ENCODE measurements at regions of chr11 and their contacts with region 1.

Region 1: DNA sequence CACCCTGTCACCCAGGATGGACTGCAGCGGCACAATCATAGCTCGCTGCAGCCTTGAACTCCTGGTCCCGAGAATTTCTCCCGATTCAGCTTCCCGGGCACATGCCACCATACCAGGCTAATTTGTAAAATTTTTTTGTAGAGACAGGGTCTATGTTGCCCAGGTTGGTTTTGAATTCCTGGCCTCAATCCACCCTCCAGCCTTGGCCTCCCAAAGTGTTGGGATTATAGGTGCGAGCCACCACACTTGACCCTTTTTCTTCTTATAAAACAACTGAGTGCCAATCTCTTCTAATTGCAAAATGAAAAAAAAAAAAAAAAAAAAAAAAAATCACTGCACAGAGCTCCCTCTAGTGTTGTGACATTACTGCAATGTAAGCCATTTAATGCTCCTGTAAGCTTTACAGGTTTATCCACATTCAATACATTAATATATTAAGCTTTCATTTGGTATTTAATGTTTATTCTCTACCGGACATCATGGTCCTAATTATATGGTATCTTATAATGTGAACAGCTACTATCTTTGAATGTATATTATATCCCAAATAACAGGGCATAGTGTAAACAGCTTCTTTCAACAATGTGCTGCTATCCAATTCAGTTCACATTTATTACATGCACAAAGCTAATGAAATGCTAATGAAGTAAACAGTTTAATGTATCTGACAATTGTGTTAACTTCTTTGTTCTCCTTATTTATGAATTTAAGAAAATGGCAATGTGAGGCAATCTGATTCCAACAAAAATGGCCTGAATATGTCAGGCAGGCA is 44.6 kb downstream of the COPB1 start:
- DNase-seq: no peak
- ATAC-seq: peak; percentile 47
- H3K4me3 Mint-ChIP-seq: no peak overlapping the region
- H3K27ac Mint-ChIP-seq: peak overlapping the region; percentile 20
- H3K4me1 Mint-ChIP-seq: peaks cover 7% of the 10 kb centered on the region
- H3K27me3 Mint-ChIP-seq: no peaks in the 10 kb centered on the region
- CTCF ChIP-seq: peak; percentile 83

Region 2: DNA sequence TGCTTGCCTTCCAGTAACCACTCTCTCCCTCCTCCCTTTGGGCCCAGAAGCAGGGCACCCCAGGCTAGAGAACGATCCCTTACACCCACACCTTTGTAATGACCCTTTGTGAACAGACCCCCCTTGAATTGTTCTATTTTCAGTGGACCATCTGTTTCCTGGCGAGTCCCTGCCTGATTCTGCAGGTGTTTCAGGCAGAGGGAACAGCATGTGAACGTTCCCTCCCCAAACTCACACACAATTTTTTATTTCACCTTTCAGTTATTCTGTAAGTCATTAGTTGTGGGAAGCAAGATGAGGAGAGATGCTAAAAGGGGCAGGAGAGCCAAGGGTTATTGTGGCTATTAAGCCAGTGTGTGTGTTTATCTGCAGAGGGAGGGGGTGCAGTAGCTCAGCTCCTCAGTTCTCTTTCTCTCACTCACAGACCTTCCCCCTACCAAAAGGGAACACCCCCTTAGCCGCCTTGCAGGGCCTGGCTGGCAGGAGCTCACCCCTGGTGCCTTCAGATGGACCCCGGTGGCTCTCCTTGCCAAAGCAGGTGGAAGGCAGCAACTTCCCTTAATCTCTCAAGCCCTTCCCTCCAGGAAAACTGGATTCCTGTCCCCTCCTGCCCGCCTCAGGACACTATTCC is 557.3 kb before region 1 on chr11:
- CTCF ChIA-PET with region 1: no interaction called
- POLR2A ChIA-PET with region 1: no interaction called
- intact Hi-C with region 1: no loop called
- DNase-seq: no peak
- ATAC-seq: no peak
- H3K4me3 Mint-ChIP-seq: no peak overlapping the region
- H3K27ac Mint-ChIP-seq: no peak overlapping the region
- H3K4me1 Mint-ChIP-seq: no peaks in the 10 kb centered on the region
- H3K27me3 Mint-ChIP-seq: peaks cover 1% of the 10 kb centered on the region
- CTCF ChIP-seq: no peak

Region 3: GRCh38 chr11:14015476-14016110 is 439.5 kb before region 1 on chr11:
- CTCF ChIA-PET with region 1: no interaction called
- POLR2A ChIA-PET with region 1: no interaction called
- intact Hi-C with region 1: no loop called
- DNase-seq: no peak
- ATAC-seq: no peak
- H3K4me3 Mint-ChIP-seq: no peak overlapping the region
- H3K27ac Mint-ChIP-seq: no peak overlapping the region
- H3K4me1 Mint-ChIP-seq: no peaks in the 10 kb centered on the region
- H3K27me3 Mint-ChIP-seq: no peaks in the 10 kb centered on the region
- CTCF ChIP-seq: no peak

Region 4: DNA sequence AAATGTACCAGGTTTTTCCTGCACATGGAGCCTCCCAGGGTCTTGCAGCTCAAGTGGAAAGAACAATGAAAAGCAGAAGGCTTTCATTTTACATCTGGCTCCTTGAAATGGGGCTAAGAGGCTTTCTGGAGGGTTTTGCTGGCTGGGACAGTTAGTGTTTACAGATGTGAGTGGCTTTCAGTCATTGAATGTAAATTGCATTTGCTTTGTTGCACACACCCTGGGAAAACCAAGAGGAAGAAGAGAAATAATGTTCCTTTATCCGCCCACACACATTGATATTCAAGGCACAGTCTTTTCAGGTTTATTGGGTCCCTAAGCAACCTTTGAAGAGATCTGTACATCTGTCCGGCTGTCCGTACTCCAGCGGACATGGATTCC is 348.0 kb before region 1 on chr11:
- CTCF ChIA-PET with region 1: no interaction called
- POLR2A ChIA-PET with region 1: no interaction called
- intact Hi-C with region 1: no loop called
- DNase-seq: no peak
- ATAC-seq: no peak
- H3K4me3 Mint-ChIP-seq: no peak overlapping the region
- H3K27ac Mint-ChIP-seq: no peak overlapping the region
- H3K4me1 Mint-ChIP-seq: peaks cover 11% of the 10 kb centered on the region
- H3K27me3 Mint-ChIP-seq: no peaks in the 10 kb centered on the region
- CTCF ChIP-seq: no peak

Region 5: DNA sequence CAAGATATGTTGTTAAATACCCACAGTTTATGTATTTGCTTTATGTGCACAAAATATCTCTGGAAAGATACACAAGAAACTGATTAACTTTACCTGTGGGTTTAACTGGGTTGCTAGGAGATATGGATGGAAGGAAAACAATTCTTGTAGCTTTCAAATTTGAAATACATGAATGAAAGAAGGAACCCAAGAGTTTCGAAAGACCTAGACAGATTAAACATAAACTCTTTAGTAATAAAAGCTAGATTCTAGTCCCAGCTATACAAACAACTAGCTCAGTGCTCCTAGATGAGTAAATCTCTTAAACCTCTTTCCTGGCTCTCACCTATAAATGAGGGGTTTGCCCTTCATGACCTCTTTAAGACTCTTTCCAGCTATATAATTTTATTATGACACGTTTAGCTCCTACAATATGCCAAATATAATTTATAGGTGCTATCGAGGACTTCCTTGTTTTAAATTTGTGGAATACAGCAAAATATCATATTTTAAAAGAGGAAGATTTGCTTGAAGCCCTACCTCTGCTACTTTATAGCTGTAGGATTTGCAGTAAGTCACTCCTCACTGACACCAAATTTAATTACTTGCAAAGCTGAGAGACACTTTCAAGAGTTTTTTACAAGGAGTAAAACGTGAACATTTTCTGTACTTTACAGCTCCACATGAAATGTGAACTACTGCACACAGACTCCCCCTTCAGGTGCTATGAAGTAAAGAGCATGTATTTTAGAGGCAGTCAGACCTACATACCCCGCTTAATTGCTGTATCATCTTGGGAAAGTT is 146.7 kb before region 1 on chr11:
- CTCF ChIA-PET with region 1: interaction called, 128 read pairs
- POLR2A ChIA-PET with region 1: no interaction called
- intact Hi-C with region 1: no loop called
- DNase-seq: no peak
- ATAC-seq: peak; percentile 81
- H3K4me3 Mint-ChIP-seq: no peak overlapping the region
- H3K27ac Mint-ChIP-seq: no peak overlapping the region
- H3K4me1 Mint-ChIP-seq: peaks cover 28% of the 10 kb centered on the region
- H3K27me3 Mint-ChIP-seq: no peaks in the 10 kb centered on the region
- CTCF ChIP-seq: peak; percentile 70

Region 6: GRCh38 chr11:14413307-14414069 is 41.6 kb before region 1 on chr11:
- CTCF ChIA-PET with region 1: interaction called, 27 read pairs
- POLR2A ChIA-PET with region 1: no interaction called
- intact Hi-C with region 1: no loop called
- DNase-seq: peak; percentile 62
- ATAC-seq: no peak
- H3K4me3 Mint-ChIP-seq: no peak overlapping the region
- H3K27ac Mint-ChIP-seq: peak overlapping the region; percentile 87
- H3K4me1 Mint-ChIP-seq: peaks cover 71% of the 10 kb centered on the region
- H3K27me3 Mint-ChIP-seq: no peaks in the 10 kb centered on the region
- CTCF ChIP-seq: peak; percentile 56

Region 7: GRCh38 chr11:14425621-14426020 is 29.4 kb before region 1 on chr11:
- CTCF ChIA-PET with region 1: no interaction called
- POLR2A ChIA-PET with region 1: no interaction called
- intact Hi-C with region 1: no loop called
- DNase-seq: no peak
- ATAC-seq: no peak
- H3K4me3 Mint-ChIP-seq: no peak overlapping the region
- H3K27ac Mint-ChIP-seq: no peak overlapping the region
- H3K4me1 Mint-ChIP-seq: peaks cover 4% of the 10 kb centered on the region
- H3K27me3 Mint-ChIP-seq: no peaks in the 10 kb centered on the region
- CTCF ChIP-seq: no peak

Region 8: GRCh38 chr11:14471127-14471526 is 16.1 kb after region 1 on chr11:
- CTCF ChIA-PET with region 1: interaction called, 31 read pairs
- POLR2A ChIA-PET with region 1: interaction called, 4 read pairs
- intact Hi-C with region 1: no loop called
- DNase-seq: no peak
- ATAC-seq: no peak
- H3K4me3 Mint-ChIP-seq: no peak overlapping the region
- H3K27ac Mint-ChIP-seq: peak overlapping the region; percentile 18
- H3K4me1 Mint-ChIP-seq: peaks cover 51% of the 10 kb centered on the region
- H3K27me3 Mint-ChIP-seq: no peaks in the 10 kb centered on the region
- CTCF ChIP-seq: no peak